ENCODE measurements at regions of chr12 and their contacts with region 1.

Region 1: GRCh38 chr12:121888478-121889266 is at the start of gene PSMD9:
- DNase-seq: peak; percentile 98
- H3K4me3 ChIP-seq: peak within 1 kb of the TSS; percentile 47 to 82 (median 78)
- H3K27ac ChIP-seq: peak within 1 kb of the TSS; percentile 85
- H3K4me1 ChIP-seq: peaks cover 21% of the 10 kb centered on the region
- H3K27me3 ChIP-seq: no peaks in the 10 kb centered on the region
- CTCF ChIP-seq: peak; percentile 59 to 87
- total RNA-seq, gene PSMD9: 39.8 to 80.6 TPM

Region 2: DNA sequence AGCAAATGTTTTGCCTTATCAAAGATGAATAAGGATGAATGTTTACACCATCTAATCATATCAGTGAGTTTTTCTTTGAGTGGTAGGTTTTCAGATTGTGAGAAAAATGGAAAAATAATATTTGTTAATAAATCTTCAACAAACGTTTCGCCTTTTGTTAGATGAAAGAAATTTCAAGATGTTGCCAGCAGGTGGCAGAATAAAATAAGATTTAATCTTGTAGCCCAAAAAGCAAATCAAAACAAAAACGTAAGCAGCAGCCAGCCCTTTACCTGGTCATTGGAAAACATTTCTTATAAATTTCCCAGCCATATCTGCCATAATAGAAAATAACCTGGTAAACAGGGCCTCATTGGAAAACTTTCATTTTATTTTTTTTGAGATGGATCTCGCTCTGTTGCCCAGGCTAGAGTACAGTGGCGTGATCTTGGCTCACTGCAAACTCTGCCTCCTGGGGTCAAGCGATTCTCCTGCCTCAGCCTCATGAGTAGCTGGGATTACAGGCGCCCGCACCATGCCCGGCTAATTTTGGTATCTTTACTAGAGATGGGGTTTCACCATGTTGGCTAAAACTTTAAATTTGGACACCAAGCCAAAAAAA is 191.5 kb before region 1 on chr12:
- CTCF ChIA-PET with region 1: no interaction called
- dilution Hi-C with region 1: no loop called
- in situ Hi-C with region 1: loop called in 1 of 2 experiments (anchors 10 kb)
- intact Hi-C with region 1: loop called (anchors 1 kb)
- DNase-seq: no peak
- H3K4me3 ChIP-seq: no peak overlapping the region
- H3K27ac ChIP-seq: no peak overlapping the region
- H3K4me1 ChIP-seq: no peaks in the 10 kb centered on the region
- H3K27me3 ChIP-seq: no peaks in the 10 kb centered on the region
- CTCF ChIP-seq: peak; percentile 37 to 40

Region 3: GRCh38 chr12:121709478-121709961 is 179.2 kb before region 1 on chr12:
- CTCF ChIA-PET with region 1: no interaction called
- dilution Hi-C with region 1: no loop called
- in situ Hi-C with region 1: loop called in 1 of 2 experiments (anchors 10 kb)
- intact Hi-C with region 1: no loop called
- DNase-seq: peak; percentile 76
- H3K4me3 ChIP-seq: no peak overlapping the region
- H3K27ac ChIP-seq: peak overlapping the region; percentile 43
- H3K4me1 ChIP-seq: peaks cover 10% of the 10 kb centered on the region
- H3K27me3 ChIP-seq: no peaks in the 10 kb centered on the region
- CTCF ChIP-seq: peak; percentile 10 to 18

Region 4: GRCh38 chr12:121773011-121773777 is 115.5 kb before region 1 on chr12:
- CTCF ChIA-PET with region 1: no interaction called
- dilution Hi-C with region 1: no loop called
- in situ Hi-C with region 1: no loop called
- intact Hi-C with region 1: loop called (anchors 1 kb)
- DNase-seq: peak; percentile 64
- H3K4me3 ChIP-seq: no peak overlapping the region
- H3K27ac ChIP-seq: no peak overlapping the region
- H3K4me1 ChIP-seq: peaks cover 10% of the 10 kb centered on the region
- H3K27me3 ChIP-seq: no peaks in the 10 kb centered on the region
- CTCF ChIP-seq: peak; percentile 77 to 95

Region 5: DNA sequence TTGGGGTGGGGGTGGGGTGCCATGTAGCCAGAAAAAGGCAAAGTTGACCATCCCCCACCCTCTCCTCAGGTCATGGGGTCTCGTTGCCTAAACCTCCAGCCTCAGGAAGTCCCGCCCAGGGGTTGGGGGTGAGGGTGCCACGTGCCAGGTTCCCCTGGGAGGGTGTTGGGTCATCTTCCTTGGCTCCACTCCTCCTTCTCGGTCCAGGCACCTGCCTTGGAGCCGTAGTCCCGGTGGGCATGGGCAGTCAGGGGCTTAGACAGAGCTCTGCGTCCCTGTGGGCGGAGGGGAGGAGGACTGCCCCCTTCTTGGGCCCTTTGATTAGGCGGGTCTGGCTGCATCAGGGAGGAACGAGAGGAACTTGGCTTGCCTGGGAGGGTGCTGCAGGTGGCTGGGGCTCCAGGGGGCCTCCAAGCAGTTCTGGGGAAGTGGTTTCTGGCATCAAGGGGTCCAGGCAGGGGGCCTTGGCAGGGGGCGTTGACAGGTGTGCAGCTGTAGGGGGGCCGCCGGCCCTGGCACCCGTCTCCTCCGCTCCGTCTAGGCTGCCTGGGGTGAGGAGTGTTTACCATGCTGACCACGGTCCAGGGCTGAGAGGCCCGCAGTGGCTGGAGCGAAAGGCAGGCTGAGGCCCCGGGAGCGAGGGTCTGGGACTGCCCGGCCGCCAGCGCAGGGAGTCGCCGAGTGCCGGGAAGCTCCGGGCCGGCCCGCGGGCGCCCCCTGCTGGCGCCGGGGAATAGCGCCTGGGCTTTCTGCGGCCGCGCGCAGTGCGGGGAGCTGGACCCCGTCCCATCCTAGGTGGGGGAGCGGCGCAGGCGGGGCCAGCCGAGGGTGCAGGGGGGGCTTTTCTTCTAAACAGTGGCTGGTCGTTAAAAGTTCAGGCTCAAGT is 77.0 kb before region 1 on chr12:
- CTCF ChIA-PET with region 1: interaction called, 3 read pairs
- dilution Hi-C with region 1: no loop called
- in situ Hi-C with region 1: no loop called
- intact Hi-C with region 1: loop called (anchors 1 kb)
- DNase-seq: peak; percentile 43
- H3K4me3 ChIP-seq: peak overlapping the region; percentile 51 to 56 (median 53)
- H3K27ac ChIP-seq: no peak overlapping the region
- H3K4me1 ChIP-seq: peaks cover 20% of the 10 kb centered on the region
- H3K27me3 ChIP-seq: no peaks in the 10 kb centered on the region
- CTCF ChIP-seq: peak; percentile 57 to 82

Region 6: GRCh38 chr12:121839106-121839992 is 49.3 kb before region 1 on chr12:
- CTCF ChIA-PET with region 1: no interaction called
- dilution Hi-C with region 1: no loop called
- in situ Hi-C with region 1: no loop called
- intact Hi-C with region 1: loop called (anchors 2 kb)
- DNase-seq: peak; percentile 96
- H3K4me3 ChIP-seq: peak overlapping the region; percentile 43 to 74 (median 70)
- H3K27ac ChIP-seq: peak overlapping the region; percentile 39
- H3K4me1 ChIP-seq: no peaks in the 10 kb centered on the region
- H3K27me3 ChIP-seq: no peaks in the 10 kb centered on the region
- CTCF ChIP-seq: peak in 1 of 2 donors; percentile 32

Measured in mammary epithelial cell (primary cell).